ENCODE measurements at regions of chr12 and their contacts with region 1.

Region 1: GRCh38 chr12:76158518-76159321 is 74.2 kb upstream of the NAP1L1 start:
- DNase-seq: peak; percentile 73
- H3K4me3 Mint-ChIP-seq: peak overlapping the region; percentile 38
- H3K27ac Mint-ChIP-seq: peak overlapping the region; percentile 46
- H3K4me1 Mint-ChIP-seq: peaks cover 30% of the 10 kb centered on the region
- H3K27me3 Mint-ChIP-seq: peaks cover 12% of the 10 kb centered on the region

Region 2: GRCh38 chr12:75635606-75636410 is 522.9 kb before region 1 on chr12:
- intact Hi-C with region 1: loop called (anchors 5 kb)
- DNase-seq: no peak
- H3K4me3 Mint-ChIP-seq: no peak overlapping the region
- H3K27ac Mint-ChIP-seq: peak overlapping the region; percentile 54
- H3K4me1 Mint-ChIP-seq: peaks cover 38% of the 10 kb centered on the region
- H3K27me3 Mint-ChIP-seq: peaks cover 3% of the 10 kb centered on the region

Region 3: DNA sequence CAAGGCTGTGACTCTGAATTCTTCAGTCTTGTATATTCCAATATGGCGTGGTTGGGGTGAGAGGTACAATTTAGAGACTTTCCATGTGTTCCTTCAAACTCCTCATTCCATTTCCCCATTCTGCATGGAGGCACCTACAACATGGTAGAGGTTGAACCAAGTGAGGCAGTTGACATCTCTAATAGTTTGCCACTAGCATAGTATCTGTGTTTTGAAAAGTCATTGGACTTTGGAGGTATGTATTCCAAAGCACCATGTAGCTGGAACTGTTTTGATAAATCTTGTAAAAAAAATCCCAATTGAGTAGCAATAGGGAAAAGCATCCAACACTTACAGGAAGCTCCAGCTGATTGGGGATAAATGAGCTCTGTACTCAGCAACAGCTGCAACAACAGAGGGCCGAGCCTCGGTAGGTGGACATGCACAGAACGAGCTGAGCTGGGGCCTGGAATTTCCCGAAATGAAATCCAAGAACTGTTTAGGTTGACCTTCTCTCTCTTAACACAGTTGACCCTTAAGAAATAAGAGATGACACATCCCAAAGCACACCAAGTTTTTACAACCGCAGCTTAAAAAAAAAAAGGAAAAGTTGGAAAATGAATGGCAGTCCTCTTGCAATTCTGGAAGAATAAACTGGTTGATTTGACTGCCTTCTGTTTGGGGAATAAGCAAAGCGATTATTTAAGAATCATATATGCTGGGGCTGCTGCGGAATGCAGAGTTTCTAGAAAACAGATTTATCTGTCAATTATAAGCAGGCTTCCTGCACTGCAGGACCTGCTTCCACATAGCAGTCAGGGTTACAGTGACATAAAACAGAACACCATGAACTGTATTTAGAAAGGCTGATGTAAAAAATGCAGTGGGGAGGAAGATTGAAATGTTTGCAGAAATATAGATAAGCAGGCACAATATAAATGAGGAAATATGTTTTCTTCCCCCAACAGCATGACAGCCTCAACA is 452.7 kb before region 1 on chr12:
- intact Hi-C with region 1: no loop called
- DNase-seq: no peak
- H3K4me3 Mint-ChIP-seq: no peak overlapping the region
- H3K27ac Mint-ChIP-seq: no peak overlapping the region
- H3K4me1 Mint-ChIP-seq: peaks cover 4% of the 10 kb centered on the region
- H3K27me3 Mint-ChIP-seq: peaks cover 19% of the 10 kb centered on the region

Region 4: DNA sequence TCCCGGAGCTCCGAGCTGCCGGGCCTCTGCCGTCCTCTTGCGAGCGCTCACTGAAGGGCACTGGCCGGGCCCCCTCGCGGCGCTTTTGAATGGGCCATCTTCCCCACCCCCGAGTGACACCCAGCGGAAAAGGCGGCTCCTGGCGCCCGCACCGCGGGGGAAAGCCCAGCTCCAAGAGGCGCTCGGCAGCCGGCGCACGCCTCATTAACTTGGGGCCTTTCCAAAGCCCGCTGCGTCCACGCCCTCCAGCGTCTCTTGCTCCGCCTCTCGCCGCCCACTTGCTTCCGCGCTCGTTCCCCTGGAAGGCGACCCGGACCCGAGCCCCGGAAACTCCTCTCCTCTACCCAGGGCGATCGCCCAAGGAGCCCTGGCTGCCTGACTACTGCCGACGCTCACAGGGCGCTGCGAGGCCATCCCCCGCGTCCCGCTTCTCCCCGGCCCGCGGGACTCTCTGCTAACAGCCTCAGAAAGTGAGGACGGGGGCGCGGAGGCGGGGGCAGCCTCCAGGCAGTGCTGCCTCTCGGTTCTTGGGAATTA is 127.1 kb before region 1 on chr12 and contains the start of gene PHLDA1:
- intact Hi-C with region 1: loop called (anchors 5 kb)
- DNase-seq: peak; percentile 94
- H3K4me3 Mint-ChIP-seq: peak within 1 kb of the TSS; percentile 97
- H3K27ac Mint-ChIP-seq: peak within 1 kb of the TSS; percentile 97
- H3K4me1 Mint-ChIP-seq: peaks cover 45% of the 10 kb centered on the region
- H3K27me3 Mint-ChIP-seq: no peaks in the 10 kb centered on the region
- total RNA-seq, gene PHLDA1: 43.2 and 44.2 TPM in 2 replicates

Region 5: DNA sequence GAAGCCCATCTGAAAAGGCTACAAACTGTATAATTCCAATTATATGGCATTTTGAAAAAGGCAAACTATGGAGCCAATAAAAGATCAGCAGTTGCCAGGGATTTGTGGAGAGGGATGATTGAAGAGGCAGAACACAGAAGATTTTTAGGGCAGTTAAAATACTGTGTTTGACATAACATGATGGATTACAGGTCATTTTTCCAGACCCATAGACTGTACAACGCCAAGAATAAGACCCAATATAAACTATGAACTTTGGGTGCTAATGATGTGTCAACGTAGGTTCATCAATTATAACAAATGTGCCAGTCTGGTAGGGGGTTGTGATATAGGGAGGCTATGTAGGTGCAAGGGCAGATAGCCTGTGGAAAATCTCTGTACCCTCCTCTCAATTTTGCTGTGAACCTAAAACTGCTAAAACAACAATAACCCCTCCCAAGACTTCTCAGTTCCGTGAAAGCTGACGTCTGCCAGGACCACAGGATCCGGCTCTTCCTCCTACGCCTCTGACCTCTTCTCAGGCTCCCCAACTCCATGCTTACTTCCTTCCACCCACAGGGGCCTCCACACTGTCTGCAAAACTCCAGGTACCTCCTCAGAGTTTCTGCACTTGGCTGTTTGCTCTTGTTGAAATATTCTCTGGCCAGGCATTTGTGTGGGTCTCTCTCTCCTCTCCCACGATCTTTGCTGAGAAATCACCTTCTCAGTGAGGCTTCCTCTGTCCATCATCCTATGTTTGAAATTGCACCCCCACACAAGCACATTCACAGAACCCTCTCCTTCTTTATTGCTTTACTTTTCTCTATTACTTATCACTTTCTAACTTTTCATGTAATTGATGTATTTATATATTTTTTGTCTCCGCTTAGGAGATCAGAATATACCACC is 58.1 kb after region 1 on chr12:
- intact Hi-C with region 1: loop called (anchors 1 kb)
- DNase-seq: no peak
- H3K4me3 Mint-ChIP-seq: peak overlapping the region; percentile 3
- H3K27ac Mint-ChIP-seq: peak overlapping the region; percentile 13
- H3K4me1 Mint-ChIP-seq: peaks cover 9% of the 10 kb centered on the region
- H3K27me3 Mint-ChIP-seq: peaks cover 18% of the 10 kb centered on the region

Region 6: DNA sequence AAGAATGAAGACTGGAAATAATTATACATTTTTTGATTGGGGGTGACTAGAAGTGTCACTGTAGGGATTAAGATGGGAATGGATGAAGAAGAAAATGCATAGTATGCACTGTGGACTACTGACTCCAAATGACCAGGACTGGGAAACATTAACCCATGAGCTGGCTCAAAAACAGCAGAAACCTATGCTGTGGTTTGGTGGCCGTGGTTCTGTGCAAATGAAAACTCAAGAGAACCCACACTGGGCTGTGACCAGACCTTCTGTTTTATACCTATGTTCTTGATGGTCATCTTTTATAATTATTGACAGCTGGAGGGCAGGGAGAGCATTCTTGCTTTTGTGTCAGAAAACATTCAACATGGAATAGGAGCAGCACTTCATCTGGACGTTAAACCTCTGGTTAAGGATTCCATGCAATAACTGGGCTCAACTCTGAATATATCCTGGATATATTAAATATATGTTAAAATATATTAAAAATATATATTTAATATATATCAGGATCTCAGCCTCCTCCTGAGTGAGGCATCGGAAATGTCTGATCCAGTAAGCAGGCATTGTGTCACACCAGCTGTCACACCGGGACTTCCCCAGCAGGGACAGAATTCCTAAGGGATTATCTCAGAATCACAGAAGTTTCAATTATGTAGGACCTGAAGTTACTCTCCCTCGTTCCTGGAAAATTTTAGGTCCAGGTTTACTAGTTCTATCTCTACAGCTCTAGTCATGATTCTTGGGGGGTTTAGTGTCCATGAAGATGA is 141.0 kb after region 1 on chr12:
- intact Hi-C with region 1: no loop called
- DNase-seq: no peak
- H3K4me3 Mint-ChIP-seq: no peak overlapping the region
- H3K27ac Mint-ChIP-seq: no peak overlapping the region
- H3K4me1 Mint-ChIP-seq: peaks cover 3% of the 10 kb centered on the region
- H3K27me3 Mint-ChIP-seq: no peaks in the 10 kb centered on the region

Region 7: DNA sequence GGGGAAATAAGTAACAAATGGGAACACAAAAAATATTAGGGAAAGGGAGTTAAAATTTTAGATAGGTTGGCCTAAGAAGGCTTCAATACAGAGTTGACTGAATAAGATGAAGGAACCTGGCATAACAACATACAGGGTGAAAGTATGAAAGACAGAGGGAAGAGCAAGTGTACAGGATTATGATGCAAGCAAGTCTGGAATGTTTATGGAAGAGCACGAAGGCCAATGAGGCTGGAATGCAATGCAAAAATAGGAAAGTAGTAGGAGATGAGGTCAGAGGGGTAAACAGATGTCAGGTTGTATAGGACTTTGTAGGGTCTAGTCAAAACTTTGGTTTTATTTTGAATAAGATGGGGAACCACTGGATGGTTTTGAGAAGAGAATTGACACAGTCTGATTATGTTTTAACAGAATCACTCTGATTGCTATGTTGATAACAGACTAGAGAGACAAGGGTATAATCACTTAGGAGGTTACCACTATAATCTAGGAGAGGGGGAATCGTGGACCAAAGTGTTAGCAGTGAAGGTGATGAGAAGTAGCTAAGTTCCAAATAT is 304.0 kb after region 1 on chr12:
- intact Hi-C with region 1: loop called (anchors 5 kb)
- DNase-seq: no peak
- H3K4me3 Mint-ChIP-seq: no peak overlapping the region
- H3K27ac Mint-ChIP-seq: no peak overlapping the region
- H3K4me1 Mint-ChIP-seq: peaks cover 18% of the 10 kb centered on the region
- H3K27me3 Mint-ChIP-seq: no peaks in the 10 kb centered on the region

Measured in activated T-helper 2 cell treated with anti-CD3 and anti-CD28 coated beads, Interferon-gamma antibody, Interleukin-2, Interleukin-4, amounts not matched to agents 10 μg/mL and 5 μg/mL and 100 μg/mL, durations not matched to agents 14 hours and 24 hours and 36 hours (primary cell).